Left cardiac atrium (tissue), 4 donors: ENCODE measurements at regions of chr1 and their contacts with region 1.

Region 1: DNA sequence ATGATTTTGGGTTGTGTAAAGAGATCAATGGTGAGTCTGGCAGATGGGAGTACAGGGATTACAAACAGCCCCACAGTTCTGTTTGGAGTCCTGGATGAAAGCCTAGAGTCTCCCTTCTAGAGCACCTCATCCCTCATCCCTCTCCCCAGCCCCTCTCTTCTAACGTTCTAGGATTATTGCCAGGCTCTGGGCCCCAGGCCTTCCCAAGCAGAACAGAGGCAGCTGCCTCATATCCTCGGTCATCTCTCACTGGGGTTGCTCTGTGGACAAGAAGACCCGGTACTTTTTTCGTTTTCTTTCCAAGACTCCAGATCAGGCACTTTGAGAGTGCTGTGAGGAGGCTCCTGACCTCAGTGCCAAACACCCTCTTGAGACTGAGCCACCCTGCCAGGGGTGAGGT is 16.9 kb upstream of the KCND3 start:
- DNase-seq: no peak
- ATAC-seq: no peak

Region 2: GRCh38 chr1:111948209-111949171 is 57.9 kb before region 1 on chr1:
- intact Hi-C with region 1: no loop called
- DNase-seq: peak; percentile 70
- ATAC-seq: peak; percentile 82 to 97

Region 3: GRCh38 chr1:112105557-112105956 is 99.1 kb after region 1 on chr1:
- intact Hi-C with region 1: loop called in 1 of 2 experiments (anchors 10 kb)
- DNase-seq: no peak
- ATAC-seq: no peak